ENCODE measurements at regions of chr7 and their contacts with region 1.

Region 1: GRCh38 chr7:33185786-33186185 is 56.4 kb downstream of the BBS9 start:
- DNase-seq: peak; percentile 53
- H3K4me3 Mint-ChIP-seq: no peak overlapping the region
- H3K27ac Mint-ChIP-seq: no peak overlapping the region
- H3K4me1 Mint-ChIP-seq: peaks cover 6% of the 10 kb centered on the region
- H3K27me3 Mint-ChIP-seq: no peaks in the 10 kb centered on the region
- CTCF ChIP-seq: peak; percentile 64

Region 2: DNA sequence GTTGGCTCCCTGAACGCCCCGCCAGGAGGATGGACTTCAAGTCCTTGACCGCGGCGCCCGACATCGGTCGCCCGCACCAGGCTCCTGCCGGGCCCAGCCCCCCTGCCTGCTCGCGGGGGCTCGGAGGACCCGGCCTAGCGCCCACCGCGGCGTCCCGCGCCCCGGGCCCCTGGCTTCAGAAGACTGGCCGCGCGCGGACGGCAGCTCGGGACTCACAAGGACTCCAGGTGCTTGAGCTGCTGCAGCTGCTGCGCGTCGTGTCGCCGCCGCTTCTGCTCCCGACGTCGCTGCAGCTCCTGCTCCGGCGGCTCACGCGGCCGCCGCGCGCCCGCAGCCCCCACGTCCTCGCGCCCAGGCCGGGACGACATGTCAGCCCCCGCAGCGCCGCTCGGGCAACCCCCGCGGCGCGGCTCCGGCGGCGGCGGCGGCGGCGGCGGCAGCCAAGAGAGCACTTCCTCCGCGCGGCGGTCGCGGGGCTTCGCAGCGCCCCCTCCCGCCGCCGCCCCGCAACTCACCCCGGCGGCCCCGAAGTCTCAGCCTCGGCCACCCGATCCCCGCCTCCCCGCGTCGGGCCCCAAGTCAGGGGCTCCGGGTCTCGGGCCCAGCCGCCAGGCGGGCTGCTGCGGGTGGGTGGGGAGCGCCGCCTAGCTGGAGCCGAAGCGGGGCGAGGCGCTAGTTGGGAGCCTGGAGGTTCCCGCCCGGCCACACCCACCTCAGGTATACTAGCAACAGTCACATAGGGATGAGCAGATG is 76.6 kb before region 1 on chr7 and contains the start of gene RP9:
- CTCF ChIA-PET with region 1: no interaction called
- intact Hi-C with region 1: no loop called
- DNase-seq: peak; percentile 93
- H3K4me3 Mint-ChIP-seq: peak within 1 kb of the TSS; percentile 88
- H3K27ac Mint-ChIP-seq: peak within 1 kb of the TSS; percentile 43
- H3K4me1 Mint-ChIP-seq: peaks cover 14% of the 10 kb centered on the region
- H3K27me3 Mint-ChIP-seq: peaks cover 39% of the 10 kb centered on the region
- CTCF ChIP-seq: peak; percentile 65
- total RNA-seq, gene RP9: 30.9 and 37.2 TPM in 2 replicates

Region 3: GRCh38 chr7:33157311-33157710 is 28.5 kb before region 1 on chr7:
- CTCF ChIA-PET with region 1: no interaction called
- intact Hi-C with region 1: no loop called
- DNase-seq: no peak
- H3K4me3 Mint-ChIP-seq: no peak overlapping the region
- H3K27ac Mint-ChIP-seq: no peak overlapping the region
- H3K4me1 Mint-ChIP-seq: no peaks in the 10 kb centered on the region
- H3K27me3 Mint-ChIP-seq: no peaks in the 10 kb centered on the region
- CTCF ChIP-seq: no peak

Region 4: DNA sequence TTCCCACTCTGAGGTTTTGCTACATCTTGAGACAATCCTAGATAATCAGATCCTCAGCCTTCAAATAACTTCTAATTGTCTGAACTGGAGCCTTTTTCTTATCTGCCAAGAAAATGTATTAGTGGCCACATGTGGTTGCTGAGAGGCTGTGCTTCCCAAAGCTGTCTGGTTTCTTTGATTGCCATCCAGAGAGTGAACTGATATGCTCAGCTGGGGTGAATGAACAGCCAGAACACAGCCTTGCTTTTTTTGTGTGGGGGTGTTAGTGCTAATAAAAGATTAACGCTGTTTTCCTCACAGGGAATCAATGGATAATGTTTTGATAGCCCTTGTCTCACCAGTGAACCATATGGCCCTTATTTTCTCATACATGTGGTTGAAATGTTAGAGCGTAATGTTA is 10.4 kb after region 1 on chr7:
- CTCF ChIA-PET with region 1: no interaction called
- intact Hi-C with region 1: no loop called
- DNase-seq: no peak
- H3K4me3 Mint-ChIP-seq: no peak overlapping the region
- H3K27ac Mint-ChIP-seq: no peak overlapping the region
- H3K4me1 Mint-ChIP-seq: peaks cover 3% of the 10 kb centered on the region
- H3K27me3 Mint-ChIP-seq: no peaks in the 10 kb centered on the region
- CTCF ChIP-seq: no peak

Region 5: DNA sequence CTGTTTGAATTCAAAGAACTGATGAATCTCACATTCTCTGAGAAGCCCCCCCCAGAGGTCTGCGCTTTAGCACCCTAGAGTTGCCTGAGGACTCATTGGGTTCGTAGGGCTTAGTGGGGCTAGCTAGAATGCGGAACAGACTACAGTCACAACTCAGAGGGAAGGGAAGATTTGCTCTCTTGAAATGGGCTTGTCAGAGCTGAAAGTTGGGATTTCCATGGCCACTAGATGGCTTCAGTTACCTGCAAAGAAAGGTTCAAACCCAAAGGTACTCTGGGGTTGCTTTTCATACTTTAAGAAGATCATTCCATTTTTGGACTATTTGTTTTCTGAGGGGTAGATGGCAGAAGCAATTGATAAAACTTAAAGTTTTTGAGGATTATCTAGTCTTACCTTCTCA is 148.6 kb after region 1 on chr7:
- CTCF ChIA-PET with region 1: no interaction called
- intact Hi-C with region 1: loop called (anchors 5 kb)
- DNase-seq: peak; percentile 28
- H3K4me3 Mint-ChIP-seq: no peak overlapping the region
- H3K27ac Mint-ChIP-seq: no peak overlapping the region
- H3K4me1 Mint-ChIP-seq: no peaks in the 10 kb centered on the region
- H3K27me3 Mint-ChIP-seq: peaks cover 15% of the 10 kb centered on the region
- CTCF ChIP-seq: peak; percentile 58

Region 6: GRCh38 chr7:33459340-33459751 is 273.6 kb after region 1 on chr7:
- CTCF ChIA-PET with region 1: no interaction called
- intact Hi-C with region 1: loop called (anchors 10 kb)
- DNase-seq: peak; percentile 37
- H3K4me3 Mint-ChIP-seq: no peak overlapping the region
- H3K27ac Mint-ChIP-seq: no peak overlapping the region
- H3K4me1 Mint-ChIP-seq: no peaks in the 10 kb centered on the region
- H3K27me3 Mint-ChIP-seq: no peaks in the 10 kb centered on the region
- CTCF ChIP-seq: peak; percentile 59

Region 7: GRCh38 chr7:33895025-33895804 is 709.4 kb after region 1 on chr7:
- CTCF ChIA-PET with region 1: no interaction called
- intact Hi-C with region 1: loop called (anchors 10 kb)
- DNase-seq: peak; percentile 95
- H3K4me3 Mint-ChIP-seq: no peak overlapping the region
- H3K27ac Mint-ChIP-seq: no peak overlapping the region
- H3K4me1 Mint-ChIP-seq: peaks cover 18% of the 10 kb centered on the region
- H3K27me3 Mint-ChIP-seq: peaks cover 72% of the 10 kb centered on the region
- CTCF ChIP-seq: peak; percentile 95

Region 8: GRCh38 chr7:34165929-34166550 is 980.3 kb after region 1 on chr7:
- CTCF ChIA-PET with region 1: no interaction called
- intact Hi-C with region 1: loop called (anchors 10 kb)
- DNase-seq: peak; percentile 22
- H3K4me3 Mint-ChIP-seq: no peak overlapping the region
- H3K27ac Mint-ChIP-seq: no peak overlapping the region
- H3K4me1 Mint-ChIP-seq: no peaks in the 10 kb centered on the region
- H3K27me3 Mint-ChIP-seq: peaks cover 36% of the 10 kb centered on the region
- CTCF ChIP-seq: peak; percentile 50